ENCODE measurements at regions of chr17 and their contacts with region 1.

Region 1: DNA sequence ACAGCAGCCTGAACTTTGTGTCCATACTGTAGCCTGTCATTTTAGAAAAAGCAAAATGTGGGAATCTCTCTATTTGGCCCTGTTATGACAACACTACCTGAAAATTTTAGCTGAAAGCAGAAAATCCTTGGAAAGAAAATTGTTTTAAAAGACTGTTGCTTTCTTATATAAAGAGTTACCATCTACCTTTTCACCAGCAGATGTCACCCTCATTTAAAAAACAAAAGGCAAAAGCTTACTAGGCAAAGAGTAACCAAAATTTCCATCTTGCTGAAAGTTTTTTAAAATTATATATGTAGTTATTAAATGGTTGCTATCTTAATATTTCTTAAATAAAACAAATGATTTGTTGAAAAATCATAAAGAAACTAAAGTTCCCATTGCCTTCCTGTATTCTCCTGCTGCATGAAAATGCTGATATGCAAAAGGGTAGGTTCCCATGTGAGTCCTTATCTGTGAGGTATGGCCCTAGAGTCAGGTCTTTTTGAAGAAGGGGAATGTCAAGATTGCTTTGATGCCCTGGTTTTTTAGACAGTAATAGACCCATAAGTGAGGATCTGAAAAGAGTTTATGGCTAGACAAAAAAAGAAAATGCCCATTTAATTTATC is 61.0 kb downstream of the TNRC6C start:
- DNase-seq: no peak
- ATAC-seq: no peak
- H3K4me3 Mint-ChIP-seq: no peak overlapping the region
- H3K27ac Mint-ChIP-seq: no peak overlapping the region
- H3K4me1 Mint-ChIP-seq: peaks cover 23% of the 10 kb centered on the region
- H3K27me3 Mint-ChIP-seq: no peaks in the 10 kb centered on the region

Region 2: GRCh38 chr17:77542551-77543490 is 476.6 kb before region 1 on chr17:
- CTCF ChIA-PET with region 1: interaction called, 67 read pairs
- POLR2A ChIA-PET with region 1: no interaction called
- DNase-seq: peak; percentile 78
- ATAC-seq: peak; percentile 88
- H3K4me3 Mint-ChIP-seq: no peak overlapping the region
- H3K27ac Mint-ChIP-seq: no peak overlapping the region
- H3K4me1 Mint-ChIP-seq: peaks cover 7% of the 10 kb centered on the region
- H3K27me3 Mint-ChIP-seq: peaks cover 21% of the 10 kb centered on the region

Region 3: DNA sequence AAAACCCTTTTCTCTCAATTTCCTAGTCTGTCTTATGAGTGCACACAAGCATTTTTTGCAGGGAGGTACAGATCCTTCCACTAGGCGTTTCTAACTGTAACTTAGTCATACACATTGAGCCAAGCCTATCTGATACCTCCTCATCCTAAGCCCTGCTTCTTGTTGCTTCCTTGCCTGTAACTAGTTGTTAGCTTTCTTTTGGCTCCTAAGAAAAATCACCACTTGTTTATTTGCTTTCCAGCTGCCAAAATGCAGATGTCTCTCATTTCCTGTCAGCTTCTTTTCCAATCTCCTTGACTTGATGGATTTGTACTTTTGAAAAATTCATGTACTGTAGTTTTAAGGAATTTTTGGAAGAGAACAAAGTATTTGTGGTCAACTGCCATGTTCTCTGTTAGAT is 12.7 kb after region 1 on chr17:
- CTCF ChIA-PET with region 1: interaction called, 36 read pairs
- POLR2A ChIA-PET with region 1: no interaction called
- DNase-seq: no peak
- ATAC-seq: no peak
- H3K4me3 Mint-ChIP-seq: no peak overlapping the region
- H3K27ac Mint-ChIP-seq: peak overlapping the region; percentile 45
- H3K4me1 Mint-ChIP-seq: peaks cover 8% of the 10 kb centered on the region
- H3K27me3 Mint-ChIP-seq: no peaks in the 10 kb centered on the region

Region 4: DNA sequence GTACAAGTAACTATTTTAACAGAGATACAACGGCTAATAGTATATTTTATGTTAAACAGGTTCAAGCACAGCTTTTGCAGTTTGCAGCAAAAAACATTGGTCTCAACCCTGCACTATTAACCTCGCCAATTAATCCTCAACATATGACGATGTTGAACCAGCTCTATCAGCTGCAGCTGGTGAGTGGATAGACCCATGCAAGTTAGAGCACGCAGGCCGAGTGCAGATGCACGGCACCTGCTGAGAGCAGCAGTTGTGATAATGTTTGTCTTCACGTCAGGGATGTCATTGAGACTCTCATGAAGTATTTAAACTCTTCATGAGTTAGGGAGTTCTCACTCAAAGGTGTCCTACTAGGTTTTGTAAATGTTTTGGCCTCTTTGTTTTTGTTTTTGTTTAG is 63.5 kb after region 1 on chr17:
- CTCF ChIA-PET with region 1: interaction called, 34 read pairs
- POLR2A ChIA-PET with region 1: no interaction called
- DNase-seq: no peak
- ATAC-seq: no peak
- H3K4me3 Mint-ChIP-seq: no peak overlapping the region
- H3K27ac Mint-ChIP-seq: no peak overlapping the region
- H3K4me1 Mint-ChIP-seq: peaks cover 5% of the 10 kb centered on the region
- H3K27me3 Mint-ChIP-seq: no peaks in the 10 kb centered on the region

Region 5: GRCh38 chr17:78133971-78134898 is 114.8 kb after region 1 on chr17:
- CTCF ChIA-PET with region 1: interaction called, 13 read pairs
- POLR2A ChIA-PET with region 1: no interaction called
- DNase-seq: peak; percentile 90
- ATAC-seq: peak; percentile 12
- H3K4me3 Mint-ChIP-seq: peak overlapping the region; percentile 74
- H3K27ac Mint-ChIP-seq: peak overlapping the region; percentile 84
- H3K4me1 Mint-ChIP-seq: peaks cover 78% of the 10 kb centered on the region
- H3K27me3 Mint-ChIP-seq: no peaks in the 10 kb centered on the region